ENCODE measurements at regions of chr10 and their contacts with region 1.

Region 1: GRCh38 chr10:3186368-3186767 is 13.8 kb upstream of the PITRM1 start:
- DNase-seq: peak; percentile 85
- H3K4me3 Mint-ChIP-seq: no peak overlapping the region
- H3K27ac Mint-ChIP-seq: no peak overlapping the region
- H3K4me1 Mint-ChIP-seq: peaks cover 16% of the 10 kb centered on the region
- H3K27me3 Mint-ChIP-seq: peaks cover 4% of the 10 kb centered on the region

Region 2: GRCh38 chr10:2927958-2928840 is 258.2 kb before region 1 on chr10:
- CTCF ChIA-PET with region 1: no interaction called
- intact Hi-C with region 1: loop called (anchors 5 kb)
- DNase-seq: peak; percentile 82
- H3K4me3 Mint-ChIP-seq: no peak overlapping the region
- H3K27ac Mint-ChIP-seq: no peak overlapping the region
- H3K4me1 Mint-ChIP-seq: peaks cover 7% of the 10 kb centered on the region
- H3K27me3 Mint-ChIP-seq: peaks cover 23% of the 10 kb centered on the region

Region 3: DNA sequence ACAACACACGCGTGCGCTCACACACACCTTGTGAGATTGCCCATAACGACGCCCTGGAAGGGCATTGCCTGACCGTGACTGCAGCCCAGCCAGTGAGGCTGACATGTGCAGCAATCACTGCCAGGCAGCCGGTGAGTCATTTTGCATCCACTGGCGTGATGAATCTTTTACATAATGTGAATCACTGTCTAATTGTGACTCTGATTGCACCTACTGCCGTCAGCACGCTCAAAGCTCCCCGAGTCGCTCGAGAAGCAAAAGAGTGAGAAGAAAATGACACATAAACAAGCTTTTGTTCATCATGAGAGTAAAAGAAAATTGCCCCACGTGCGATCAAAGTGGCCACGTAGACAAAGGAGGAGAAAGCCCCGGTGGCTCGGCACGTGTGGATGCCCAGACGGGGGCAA is 236.4 kb before region 1 on chr10:
- CTCF ChIA-PET with region 1: no interaction called
- intact Hi-C with region 1: loop called (anchors 5 kb)
- DNase-seq: peak; percentile 69
- H3K4me3 Mint-ChIP-seq: no peak overlapping the region
- H3K27ac Mint-ChIP-seq: peak overlapping the region; percentile 50
- H3K4me1 Mint-ChIP-seq: peaks cover 31% of the 10 kb centered on the region
- H3K27me3 Mint-ChIP-seq: peaks cover 35% of the 10 kb centered on the region

Region 4: DNA sequence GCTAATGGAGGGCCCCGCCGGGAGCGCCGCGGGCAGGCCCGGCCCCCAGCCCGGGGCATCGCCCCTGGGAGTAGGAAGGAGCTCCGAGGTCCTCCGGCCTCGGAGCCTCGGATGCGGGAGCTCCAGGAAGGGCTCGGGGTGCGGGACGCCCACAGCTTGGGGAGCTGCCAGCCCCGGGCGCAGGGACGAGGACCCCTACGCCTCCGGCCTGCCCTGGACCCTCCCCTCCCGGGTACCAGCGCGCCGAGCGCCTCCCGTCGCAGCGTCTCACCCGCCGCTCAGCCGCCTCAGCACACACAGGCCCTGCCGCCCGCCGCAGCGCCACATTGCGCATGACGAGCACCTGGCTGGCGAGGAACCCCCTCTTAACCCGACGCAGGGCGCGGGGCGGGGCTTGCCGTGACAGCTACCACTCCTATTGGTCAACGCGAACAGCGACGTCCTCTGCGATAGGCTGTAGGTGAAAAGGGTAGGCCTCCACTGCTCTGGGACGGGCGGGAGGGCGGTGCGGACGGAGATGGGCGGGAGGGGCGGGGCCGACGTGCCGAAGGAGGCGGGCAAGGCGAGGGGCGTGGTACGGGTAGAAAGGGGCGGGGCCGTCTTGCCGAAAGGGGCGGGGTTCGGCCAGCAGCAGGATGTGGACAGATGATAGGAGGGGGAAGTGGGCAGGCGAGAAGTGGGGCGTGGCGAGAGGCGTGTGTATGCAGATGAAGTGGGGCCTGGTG is 13.8 kb before region 1 on chr10 and contains the start of gene PITRM1:
- CTCF ChIA-PET with region 1: no interaction called
- intact Hi-C with region 1: loop called (anchors 1 kb)
- DNase-seq: peak; percentile 99
- H3K4me3 Mint-ChIP-seq: peak within 1 kb of the TSS; percentile 87
- H3K27ac Mint-ChIP-seq: peak within 1 kb of the TSS; percentile 89
- H3K4me1 Mint-ChIP-seq: peaks cover 23% of the 10 kb centered on the region
- H3K27me3 Mint-ChIP-seq: no peaks in the 10 kb centered on the region
- total RNA-seq, gene PITRM1: 65.6 to 74.5 TPM

Region 5: DNA sequence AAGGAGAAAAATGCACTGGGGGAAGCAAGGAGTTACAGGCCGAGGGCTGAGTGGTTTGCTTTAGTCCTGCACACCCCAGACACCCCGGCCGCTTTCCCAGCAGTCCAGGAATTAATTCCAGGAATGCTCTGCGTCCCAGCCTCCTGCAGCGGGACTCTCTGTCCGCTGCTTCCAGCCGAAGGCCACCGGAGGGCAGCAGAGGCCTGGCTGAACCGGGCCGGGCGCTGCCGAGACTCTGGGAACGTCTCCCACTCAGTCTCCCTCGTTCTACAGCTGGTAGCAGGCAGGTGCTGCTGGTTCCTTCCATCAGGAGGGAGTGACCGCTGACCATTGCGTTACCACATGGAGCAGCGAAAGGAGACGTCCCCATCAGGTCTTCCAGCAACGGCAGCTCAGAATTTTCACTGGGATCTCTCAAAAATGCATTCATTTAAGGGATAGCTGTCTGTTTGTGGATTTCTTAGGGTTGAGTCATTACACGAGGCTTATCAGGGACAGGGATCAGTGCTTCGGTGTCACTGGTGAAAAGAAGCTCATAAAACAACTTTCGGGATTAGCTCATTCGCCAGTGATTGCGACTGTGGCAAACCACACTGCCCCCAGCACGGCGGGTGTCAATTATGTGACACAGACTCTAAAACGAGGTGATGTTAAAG is 11.1 kb after region 1 on chr10:
- CTCF ChIA-PET with region 1: interaction called, 14 read pairs
- intact Hi-C with region 1: no loop called
- DNase-seq: peak; percentile 84
- H3K4me3 Mint-ChIP-seq: no peak overlapping the region
- H3K27ac Mint-ChIP-seq: no peak overlapping the region
- H3K4me1 Mint-ChIP-seq: peaks cover 10% of the 10 kb centered on the region
- H3K27me3 Mint-ChIP-seq: peaks cover 41% of the 10 kb centered on the region

Region 6: GRCh38 chr10:3226960-3227744 is 40.8 kb after region 1 on chr10:
- CTCF ChIA-PET with region 1: no interaction called
- intact Hi-C with region 1: loop called (anchors 1 kb)
- DNase-seq: no peak
- H3K4me3 Mint-ChIP-seq: no peak overlapping the region
- H3K27ac Mint-ChIP-seq: no peak overlapping the region
- H3K4me1 Mint-ChIP-seq: peaks cover 22% of the 10 kb centered on the region
- H3K27me3 Mint-ChIP-seq: peaks cover 2% of the 10 kb centered on the region